Activated CD4-positive, alpha-beta memory T cell treated with anti-CD3 and anti-CD28 coated beads, Interleukin-2, amount 10 ng/mL, durations not matched to agents 7 days and 5 days (primary cell): ENCODE measurements at regions of chr17 and their contacts with region 1.

Region 1: DNA sequence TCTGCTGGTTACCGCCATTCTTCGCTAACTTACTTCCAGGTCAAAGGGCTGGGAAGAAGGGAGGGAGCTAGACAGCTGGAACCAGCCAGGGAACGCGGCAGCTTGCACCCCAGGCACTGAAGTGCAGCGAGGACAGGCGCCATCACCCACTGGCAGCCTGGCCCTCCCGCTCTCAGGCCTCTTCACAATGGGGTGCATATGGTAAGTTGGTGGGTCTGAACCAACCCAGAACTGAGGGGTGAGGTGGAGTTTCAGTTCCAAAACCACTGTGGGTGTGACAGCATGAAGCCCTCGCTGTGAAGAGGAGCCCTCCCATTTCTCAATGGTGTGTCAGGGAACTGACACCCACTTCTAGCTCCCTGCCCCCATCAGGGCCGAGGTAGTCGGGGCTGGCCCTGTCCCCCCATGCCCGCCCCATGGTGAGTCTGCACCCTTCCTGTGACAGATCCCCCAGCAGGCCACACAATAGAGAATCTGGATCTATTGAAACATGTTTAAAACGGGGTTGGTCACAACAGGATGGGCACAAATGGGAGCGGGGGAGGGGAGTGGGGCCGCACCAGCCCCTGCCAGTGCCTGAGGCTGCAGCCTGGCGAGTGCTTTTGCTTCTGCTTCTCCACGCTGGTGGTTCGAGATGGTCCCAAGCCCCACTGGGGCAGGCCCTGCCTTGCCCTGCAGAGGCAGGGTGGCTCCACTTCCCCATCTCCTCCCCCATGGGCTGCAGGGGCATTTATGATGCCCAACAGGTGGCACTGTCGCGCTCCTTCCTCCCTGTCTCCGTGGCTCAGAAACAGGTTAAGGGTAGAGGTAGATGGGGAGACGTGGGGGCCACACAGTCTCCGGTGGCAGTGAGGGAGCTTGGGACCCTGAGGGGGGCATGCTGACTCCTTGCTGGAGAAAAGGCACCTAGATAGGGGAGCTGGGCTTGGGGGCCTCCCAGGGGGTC is 2.3 kb downstream of the LIMD2 start:
- DNase-seq: peak; percentile 89
- H3K4me3 Mint-ChIP-seq: peak overlapping the region; percentile 96
- H3K27ac Mint-ChIP-seq: peak overlapping the region; percentile 96
- H3K4me1 Mint-ChIP-seq: peaks cover 48% of the 10 kb centered on the region
- H3K27me3 Mint-ChIP-seq: no peaks in the 10 kb centered on the region

Region 2: DNA sequence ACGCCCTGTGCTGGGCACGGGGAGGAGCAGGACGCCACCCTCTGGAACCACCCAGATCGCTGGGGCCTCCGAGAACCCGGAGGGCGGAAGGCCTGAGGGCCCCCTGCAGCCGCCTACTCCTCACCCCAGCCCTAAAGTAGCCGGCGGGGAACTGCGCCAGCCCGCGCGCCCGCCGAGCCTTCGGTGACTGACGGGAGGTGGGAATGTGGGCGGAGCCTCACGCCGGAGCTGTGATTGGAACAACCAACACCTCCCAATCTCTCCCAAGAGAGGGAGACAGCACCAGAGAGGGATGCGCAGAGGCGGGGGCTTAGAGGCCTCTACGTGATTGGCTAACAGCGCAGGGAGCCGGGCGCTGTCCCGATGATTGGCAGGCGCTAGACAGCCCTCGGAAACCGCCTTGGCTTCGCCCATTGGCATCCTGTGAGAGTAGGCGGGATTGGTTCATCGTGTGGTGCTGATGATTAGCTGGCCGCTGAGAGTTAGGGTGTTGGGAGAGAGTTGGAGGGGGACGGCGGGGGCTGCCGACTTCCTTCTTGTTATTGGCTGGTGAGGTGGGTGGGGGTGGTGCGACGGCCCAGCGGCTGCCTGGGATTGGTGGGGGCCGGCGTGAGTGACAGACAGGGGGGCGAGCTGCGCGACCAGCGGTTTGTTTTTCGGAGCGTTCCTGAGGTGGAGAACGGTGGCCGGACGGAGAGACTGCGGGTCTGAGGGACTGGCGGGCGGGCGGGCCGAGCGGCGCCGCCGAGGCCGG is 75.7 kb before region 1 on chr17 and contains the start of gene MAP3K3:
- CTCF ChIA-PET with region 1: interaction called, 4 read pairs
- POLR2A ChIA-PET with region 1: interaction called, 44 read pairs
- DNase-seq: peak; percentile 98
- H3K4me3 Mint-ChIP-seq: peak within 1 kb of the TSS; percentile 99
- H3K27ac Mint-ChIP-seq: peak within 1 kb of the TSS; percentile 89
- H3K4me1 Mint-ChIP-seq: peaks cover 35% of the 10 kb centered on the region
- H3K27me3 Mint-ChIP-seq: peaks cover 8% of the 10 kb centered on the region
- total RNA-seq, gene MAP3K3: 46.5 to 47.8 TPM

Region 3: GRCh38 chr17:63646488-63646806 is 51.2 kb before region 1 on chr17:
- CTCF ChIA-PET with region 1: no interaction called
- POLR2A ChIA-PET with region 1: no interaction called
- DNase-seq: no peak
- H3K4me3 Mint-ChIP-seq: no peak overlapping the region
- H3K27ac Mint-ChIP-seq: no peak overlapping the region
- H3K4me1 Mint-ChIP-seq: peaks cover 16% of the 10 kb centered on the region
- H3K27me3 Mint-ChIP-seq: no peaks in the 10 kb centered on the region

Region 4: DNA sequence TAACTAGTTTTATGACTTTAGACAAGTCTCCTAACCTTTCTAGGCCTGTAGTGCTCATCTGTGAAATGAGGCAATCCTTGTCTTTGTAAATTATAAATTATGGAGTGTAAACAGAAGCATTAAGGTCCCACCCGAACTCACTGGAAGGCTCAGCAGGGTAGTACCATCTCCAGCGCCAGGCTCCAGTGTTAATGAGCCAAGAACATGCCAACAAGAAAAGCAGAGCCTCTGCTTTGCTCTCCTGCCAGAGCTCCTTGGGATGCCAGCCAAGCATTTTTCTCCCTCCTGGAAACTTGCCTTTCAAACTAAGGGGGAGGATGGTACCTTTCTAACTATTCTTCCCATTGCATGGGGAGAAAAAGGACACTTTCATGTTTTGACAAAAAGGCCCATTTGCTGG is 12.6 kb before region 1 on chr17:
- CTCF ChIA-PET with region 1: interaction called, 5 read pairs
- POLR2A ChIA-PET with region 1: interaction called, 25 read pairs
- DNase-seq: no peak
- H3K4me3 Mint-ChIP-seq: no peak overlapping the region
- H3K27ac Mint-ChIP-seq: no peak overlapping the region
- H3K4me1 Mint-ChIP-seq: peaks cover 1% of the 10 kb centered on the region
- H3K27me3 Mint-ChIP-seq: no peaks in the 10 kb centered on the region

Region 5: GRCh38 chr17:63714547-63715277 is 17.1 kb after region 1 on chr17:
- CTCF ChIA-PET with region 1: interaction called, 65 read pairs
- POLR2A ChIA-PET with region 1: interaction called, 151 read pairs
- DNase-seq: no peak
- H3K4me3 Mint-ChIP-seq: no peak overlapping the region
- H3K27ac Mint-ChIP-seq: no peak overlapping the region
- H3K4me1 Mint-ChIP-seq: peaks cover 5% of the 10 kb centered on the region
- H3K27me3 Mint-ChIP-seq: no peaks in the 10 kb centered on the region

Region 6: GRCh38 chr17:63741221-63742049 is 43.8 kb after region 1 on chr17 and contains the start of gene STRADA:
- CTCF ChIA-PET with region 1: interaction called, 8 read pairs
- POLR2A ChIA-PET with region 1: interaction called, 110 read pairs
- DNase-seq: peak; percentile 99
- H3K4me3 Mint-ChIP-seq: peak within 1 kb of the TSS; percentile 90
- H3K27ac Mint-ChIP-seq: peak within 1 kb of the TSS; percentile 93
- H3K4me1 Mint-ChIP-seq: peaks cover 33% of the 10 kb centered on the region
- H3K27me3 Mint-ChIP-seq: no peaks in the 10 kb centered on the region
- total RNA-seq, gene STRADA: 53.1 to 59.4 TPM

Region 7: DNA sequence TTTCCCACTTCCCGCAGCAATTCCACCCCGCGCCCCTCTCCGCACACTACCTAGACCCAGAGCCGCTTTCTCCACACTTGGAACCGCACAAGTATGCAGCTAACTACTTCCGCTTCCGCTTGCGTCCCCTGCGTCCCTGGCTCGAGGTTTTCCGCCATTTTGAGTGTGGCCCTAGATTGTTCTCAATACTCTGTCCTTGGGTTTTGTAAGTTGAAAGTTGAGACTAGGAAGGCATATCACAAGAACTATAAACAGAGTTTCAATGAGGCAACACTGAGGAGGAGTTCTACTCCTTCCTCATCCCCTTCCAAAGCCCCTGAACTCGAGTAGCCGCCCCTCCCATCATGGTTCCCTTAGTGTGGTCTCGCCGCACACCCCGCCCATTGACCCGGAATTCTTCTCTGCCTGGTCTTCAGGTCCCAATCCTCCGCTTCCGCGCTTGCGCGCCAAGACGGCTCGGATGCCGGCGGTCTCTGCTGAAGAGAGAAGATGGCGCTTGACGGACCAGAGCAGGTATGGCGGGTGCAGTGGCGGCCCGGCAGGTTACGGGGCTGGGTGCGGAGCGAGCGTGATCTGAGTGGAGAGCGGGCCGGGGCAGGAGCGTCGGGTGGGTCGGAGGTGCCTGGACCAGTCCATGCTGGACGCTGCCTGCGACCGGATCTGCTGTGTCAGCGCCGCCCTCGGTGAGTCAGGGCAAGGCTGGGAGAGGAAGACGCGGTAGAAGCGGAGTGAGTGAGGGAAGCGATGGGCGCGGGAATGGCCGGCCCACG is 129.6 kb after region 1 on chr17 and contains the starts of genes FTSJ3 and PSMC5:
- CTCF ChIA-PET with region 1: interaction called, 4 read pairs
- POLR2A ChIA-PET with region 1: interaction called, 12 read pairs
- DNase-seq: peak; percentile 96
- H3K4me3 Mint-ChIP-seq: peak within 1 kb of the TSS; percentile 89
- H3K27ac Mint-ChIP-seq: peak within 1 kb of the TSS; percentile 93
- H3K4me1 Mint-ChIP-seq: peaks cover 82% of the 10 kb centered on the region
- H3K27me3 Mint-ChIP-seq: no peaks in the 10 kb centered on the region
- total RNA-seq, gene FTSJ3: 38.9 to 43.8 TPM
- total RNA-seq, gene PSMC5: 152 to 162 TPM

Region 8: GRCh38 chr17:63842540-63843386 is 145.1 kb after region 1 on chr17 and contains the start of gene SMARCD2:
- CTCF ChIA-PET with region 1: interaction called, 4 read pairs
- POLR2A ChIA-PET with region 1: interaction called, 26 read pairs
- DNase-seq: peak; percentile 99
- H3K4me3 Mint-ChIP-seq: peak within 1 kb of the TSS; percentile 97
- H3K27ac Mint-ChIP-seq: peak within 1 kb of the TSS; percentile 96
- H3K4me1 Mint-ChIP-seq: peaks cover 46% of the 10 kb centered on the region
- H3K27me3 Mint-ChIP-seq: no peaks in the 10 kb centered on the region
- total RNA-seq, gene SMARCD2: 150 to 152 TPM